Dorsolateral prefrontal cortex (tissue), 120 donors: ENCODE measurements at regions of chr10 and their contacts with region 1.

Region 1: GRCh38 chr10:97898429-97898828 is 48.8 kb downstream of the GOLGA7B start:
- DNase-seq: no peak
- H3K4me3 ChIP-seq: no peak overlapping the region
- H3K27ac ChIP-seq: no peak overlapping the region
- H3K27me3 ChIP-seq: no peaks in the 10 kb centered on the region
- CTCF ChIP-seq: no peak

Region 2: DNA sequence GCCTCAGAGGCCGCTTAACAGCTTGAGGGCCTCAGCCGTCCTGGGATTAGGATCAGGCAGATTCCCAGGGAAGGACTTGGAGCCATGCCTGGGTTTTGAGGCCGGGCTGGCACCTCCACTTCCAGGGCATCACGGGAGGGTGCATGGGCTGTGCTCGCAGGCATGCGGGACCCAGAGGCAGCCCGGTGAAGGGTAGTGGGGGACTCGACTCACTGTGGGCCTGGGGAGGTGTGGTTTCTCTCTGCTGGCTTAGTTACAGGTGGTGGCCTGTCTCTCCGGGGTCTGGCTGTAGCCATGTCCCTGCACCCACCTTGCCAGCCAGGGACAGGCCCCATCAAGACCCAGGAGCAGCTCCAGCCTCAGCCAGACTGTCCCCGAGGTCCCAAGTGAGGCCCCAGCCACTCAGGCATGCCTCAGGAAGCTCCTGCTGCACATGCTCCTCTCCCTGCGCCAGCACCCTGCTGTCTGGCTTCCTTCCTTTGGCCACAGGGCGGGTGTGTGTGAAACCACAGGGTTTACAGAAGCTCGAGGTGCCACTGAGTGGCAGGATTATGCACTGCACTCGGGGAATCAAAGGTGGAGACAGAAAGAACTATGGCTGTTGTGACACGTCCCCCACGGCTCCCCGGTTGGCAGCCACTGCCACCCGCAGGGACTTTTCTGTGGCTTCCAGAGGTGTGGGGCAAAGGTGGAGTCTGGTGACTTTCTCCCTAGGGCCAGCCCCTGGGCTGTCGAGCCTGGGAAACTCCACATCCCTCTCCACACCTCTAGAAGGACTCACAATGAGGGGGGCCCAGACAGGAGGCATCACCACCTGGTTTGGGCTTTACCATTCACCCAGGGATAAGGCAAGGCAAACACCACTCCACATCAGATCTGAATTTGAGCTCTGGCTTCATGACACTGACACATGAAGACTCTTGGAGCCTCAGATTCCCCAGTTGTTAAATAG is 29.1 kb before region 1 on chr10:
- intact Hi-C with region 1: no loop called
- DNase-seq: peak; percentile 37 to 96 (median 84)
- H3K4me3 ChIP-seq: peak overlapping the region in 8 of 59 donors; percentile 1 to 29 (median 15)
- H3K27ac ChIP-seq: peak overlapping the region in 11 of 59 donors; percentile 3 to 53 (median 33)
- H3K27me3 ChIP-seq: peaks cover 0 to 18% (median 0%) of the 10 kb centered on the region in 45 donors
- CTCF ChIP-seq: peak; percentile 49 to 84 (median 71)

Region 3: DNA sequence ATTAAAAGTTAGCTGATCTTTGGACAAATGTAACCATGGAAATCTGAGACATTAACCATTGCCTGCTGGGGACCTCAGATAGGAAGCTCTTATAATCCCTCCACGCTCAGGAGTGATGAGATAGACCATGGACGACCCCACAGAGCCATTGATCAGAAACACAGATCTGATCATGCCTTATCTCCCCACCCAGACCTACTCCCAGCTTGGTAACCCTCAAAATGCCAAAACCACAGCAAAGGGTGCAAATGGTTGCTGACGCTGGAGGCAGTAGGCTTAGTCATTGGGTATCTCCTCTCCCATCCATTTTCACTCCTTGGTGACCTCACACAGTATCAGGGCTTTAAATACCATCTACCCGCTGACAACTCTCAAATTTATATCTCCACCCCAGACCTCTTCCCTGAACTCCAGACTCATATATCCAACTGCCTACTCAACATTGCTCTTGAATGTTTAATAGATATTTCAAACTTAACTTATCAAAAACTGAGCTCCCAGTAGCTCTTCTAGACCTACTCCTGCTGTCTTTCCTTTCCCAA is 71.2 kb after region 1 on chr10:
- intact Hi-C with region 1: loop called in 1 of 2 experiments (anchors 2 kb)
- DNase-seq: no peak
- H3K4me3 ChIP-seq: no peak overlapping the region
- H3K27ac ChIP-seq: no peak overlapping the region
- H3K27me3 ChIP-seq: peaks cover 0 to 6% (median 0%) of the 10 kb centered on the region in 45 donors
- CTCF ChIP-seq: no peak